ENCODE measurements at regions of chr10 and their contacts with region 1.

Region 1: GRCh38 chr10:11255796-11256444 is 238.2 kb downstream of the CELF2 start:
- DNase-seq: no peak
- ATAC-seq: no peak
- H3K4me3 ChIP-seq: no peak overlapping the region
- H3K4me3 Mint-ChIP-seq: no peak overlapping the region
- H3K27ac ChIP-seq: peak overlapping the region in 1 of 2 donors; percentile 26
- H3K27ac Mint-ChIP-seq: peak overlapping the region; percentile 93
- H3K4me1 ChIP-seq: peaks cover 32% of the 10 kb centered on the region
- H3K4me1 Mint-ChIP-seq: peaks cover 89% of the 10 kb centered on the region
- H3K27me3 ChIP-seq: no peaks in the 10 kb centered on the region
- H3K27me3 Mint-ChIP-seq: no peaks in the 10 kb centered on the region
- CTCF ChIP-seq: no peak

Region 2: DNA sequence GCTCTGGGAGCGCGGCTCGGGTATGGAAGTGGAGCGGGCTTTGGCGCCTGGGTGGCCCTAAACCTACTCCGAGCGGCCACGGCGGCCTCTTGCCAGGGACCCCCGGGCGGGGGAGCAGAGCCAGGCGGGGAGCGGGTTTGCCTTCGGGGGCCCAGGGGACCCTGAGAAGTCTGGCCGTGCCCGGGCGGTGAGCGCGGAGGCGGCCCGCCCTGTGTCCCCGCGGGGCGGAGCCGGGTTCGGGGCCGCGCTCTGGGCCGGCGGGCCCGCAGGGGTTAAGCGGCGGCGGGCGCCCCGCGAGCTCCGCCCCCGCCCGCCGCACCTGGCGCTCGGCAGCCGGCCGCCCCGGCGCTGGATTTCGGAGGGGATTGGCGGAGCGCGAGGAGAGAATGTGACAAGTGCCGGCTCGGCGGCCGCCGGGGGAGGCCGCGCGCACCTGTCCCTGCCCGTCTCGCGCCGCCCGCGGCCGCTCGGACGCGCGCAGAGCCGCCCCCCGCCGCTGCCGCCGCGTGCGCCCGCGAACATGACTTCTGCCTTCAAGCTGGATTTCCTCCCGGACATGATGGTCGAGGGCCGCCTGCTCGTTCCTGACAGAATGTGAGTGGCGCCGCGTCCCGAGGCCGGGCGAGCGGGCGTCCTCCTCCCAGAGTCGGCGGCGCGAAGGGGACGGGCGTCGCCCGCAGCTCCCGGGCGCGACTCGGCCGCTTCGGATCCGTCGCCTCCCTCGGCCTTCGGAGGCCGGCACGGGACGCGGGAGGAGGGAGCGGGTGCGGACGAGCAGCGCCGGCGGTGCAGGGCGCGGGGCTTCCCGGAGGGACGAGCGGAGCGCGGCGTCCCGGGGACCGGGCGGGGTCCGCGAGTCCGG is 238.1 kb before region 1 on chr10 and contains the start of gene CELF2:
- CTCF ChIA-PET with region 1: no interaction called
- POLR2A ChIA-PET with region 1: no interaction called
- intact Hi-C with region 1: loop called in 1 of 2 experiments (anchors 10 kb)
- DNase-seq: peak in 13 of 14 experiments; percentile 8 to 77 (median 36)
- ATAC-seq: peak; percentile 78
- H3K4me3 ChIP-seq: peak within 1 kb of the TSS; percentile 32
- H3K4me3 Mint-ChIP-seq: peak within 1 kb of the TSS; percentile 84
- H3K27ac ChIP-seq: no peak within 1 kb of the TSS
- H3K27ac Mint-ChIP-seq: no peak within 1 kb of the TSS
- H3K4me1 ChIP-seq: peaks cover 9% of the 10 kb centered on the region
- H3K4me1 Mint-ChIP-seq: peaks cover 28% of the 10 kb centered on the region
- H3K27me3 ChIP-seq: peaks cover 30 to 77% of the 10 kb centered on the region in 2 experiments
- H3K27me3 Mint-ChIP-seq: peaks cover 77% of the 10 kb centered on the region
- CTCF ChIP-seq: no peak
- total RNA-seq, gene CELF2: 197 to 205 TPM

Region 3: GRCh38 chr10:11209830-11210181 is 46.1 kb before region 1 on chr10:
- CTCF ChIA-PET with region 1: interaction called, 3 read pairs
- POLR2A ChIA-PET with region 1: interaction called, 3 read pairs
- intact Hi-C with region 1: loop called in 1 of 2 experiments (anchors 5 kb)
- DNase-seq: peak in 2 of 14 experiments; percentile 51 to 58
- ATAC-seq: peak; percentile 11
- H3K4me3 ChIP-seq: peak overlapping the region; percentile 22
- H3K4me3 Mint-ChIP-seq: peak overlapping the region; percentile 82
- H3K27ac ChIP-seq: peak overlapping the region; percentile 43 to 60
- H3K27ac Mint-ChIP-seq: peak overlapping the region; percentile 81
- H3K4me1 ChIP-seq: peaks cover 84% of the 10 kb centered on the region
- H3K4me1 Mint-ChIP-seq: peaks cover 98% of the 10 kb centered on the region
- H3K27me3 ChIP-seq: no peaks in the 10 kb centered on the region
- H3K27me3 Mint-ChIP-seq: no peaks in the 10 kb centered on the region
- CTCF ChIP-seq: no peak

Region 4: GRCh38 chr10:12121673-12122072 is 865.8 kb after region 1 on chr10:
- CTCF ChIA-PET with region 1: no interaction called
- POLR2A ChIA-PET with region 1: no interaction called
- intact Hi-C with region 1: no loop called
- DNase-seq: no peak
- ATAC-seq: no peak
- H3K4me3 ChIP-seq: no peak overlapping the region
- H3K4me3 Mint-ChIP-seq: no peak overlapping the region
- H3K27ac ChIP-seq: no peak overlapping the region
- H3K27ac Mint-ChIP-seq: no peak overlapping the region
- H3K4me1 ChIP-seq: peaks cover 10% of the 10 kb centered on the region
- H3K4me1 Mint-ChIP-seq: peaks cover 15% of the 10 kb centered on the region
- H3K27me3 ChIP-seq: no peaks in the 10 kb centered on the region
- H3K27me3 Mint-ChIP-seq: no peaks in the 10 kb centered on the region
- CTCF ChIP-seq: no peak

Measured in CD4-positive, alpha-beta T cell (primary cell).